PC-9 (cell line): ENCODE measurements at regions of chr2 and their contacts with region 1.

Region 1: GRCh38 chr2:26911911-26912861 is 58.3 kb upstream of the MAPRE3 start:
- DNase-seq: no peak
- H3K4me3 ChIP-seq: no peak overlapping the region
- H3K27ac ChIP-seq: no peak overlapping the region
- H3K4me1 ChIP-seq: no peaks in the 10 kb centered on the region
- H3K27me3 ChIP-seq: peaks cover 74% of the 10 kb centered on the region
- CTCF ChIP-seq: no peak

Region 2: GRCh38 chr2:26112201-26112600 is 800.0 kb before region 1 on chr2:
- CTCF ChIA-PET with region 1: interaction called, 18 read pairs
- POLR2A ChIA-PET with region 1: no interaction called
- intact Hi-C with region 1: no loop called
- DNase-seq: no peak
- H3K4me3 ChIP-seq: no peak overlapping the region
- H3K27ac ChIP-seq: no peak overlapping the region
- H3K4me1 ChIP-seq: peaks cover 8% of the 10 kb centered on the region; the same call in 1 of the 2 replicates
- H3K27me3 ChIP-seq: no peaks in the 10 kb centered on the region
- CTCF ChIP-seq: no peak